ENCODE measurements at regions of chr3 and their contacts with region 1.

Region 1: DNA sequence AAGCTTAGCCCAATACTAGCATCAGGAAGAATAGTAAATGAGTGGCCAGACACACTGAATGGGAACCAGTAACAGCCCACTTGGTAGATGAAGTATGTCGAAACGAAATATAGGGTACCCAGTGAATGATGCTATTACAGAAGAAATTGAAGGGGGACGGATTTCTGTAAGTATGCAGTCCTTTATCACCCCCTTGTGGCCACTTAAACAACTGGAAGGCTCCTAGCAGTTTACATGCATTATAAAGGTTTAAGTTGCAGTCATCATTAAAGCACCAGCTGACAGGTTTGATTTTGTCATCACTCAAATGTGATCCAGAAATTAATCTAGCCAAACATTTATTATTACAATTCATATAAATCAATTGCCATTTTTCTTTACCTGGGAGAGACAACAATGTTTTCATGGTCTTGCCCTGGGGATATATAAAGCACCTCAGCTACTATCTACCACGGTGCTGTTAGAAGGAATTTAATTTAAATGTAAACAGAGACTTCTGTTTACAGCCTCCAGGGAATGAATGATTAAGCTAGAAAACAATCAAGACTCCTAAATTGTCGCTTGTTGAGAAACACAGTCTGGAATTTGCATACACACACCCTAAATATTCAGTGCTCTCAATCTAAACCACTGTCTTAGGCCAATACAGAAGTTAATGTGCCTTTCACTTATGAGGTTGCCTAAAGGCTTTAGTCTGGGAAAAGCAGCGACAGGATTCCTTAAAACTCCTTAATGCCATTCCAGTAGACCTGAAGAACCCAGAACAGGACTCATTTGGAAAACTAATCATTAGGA is 7.8 kb downstream of the EIF1B start:
- DNase-seq: peak; percentile 31
- H3K4me3 Mint-ChIP-seq: no peak overlapping the region
- H3K27ac Mint-ChIP-seq: no peak overlapping the region
- H3K4me1 Mint-ChIP-seq: peaks cover 4% of the 10 kb centered on the region
- H3K27me3 Mint-ChIP-seq: no peaks in the 10 kb centered on the region

Region 2: DNA sequence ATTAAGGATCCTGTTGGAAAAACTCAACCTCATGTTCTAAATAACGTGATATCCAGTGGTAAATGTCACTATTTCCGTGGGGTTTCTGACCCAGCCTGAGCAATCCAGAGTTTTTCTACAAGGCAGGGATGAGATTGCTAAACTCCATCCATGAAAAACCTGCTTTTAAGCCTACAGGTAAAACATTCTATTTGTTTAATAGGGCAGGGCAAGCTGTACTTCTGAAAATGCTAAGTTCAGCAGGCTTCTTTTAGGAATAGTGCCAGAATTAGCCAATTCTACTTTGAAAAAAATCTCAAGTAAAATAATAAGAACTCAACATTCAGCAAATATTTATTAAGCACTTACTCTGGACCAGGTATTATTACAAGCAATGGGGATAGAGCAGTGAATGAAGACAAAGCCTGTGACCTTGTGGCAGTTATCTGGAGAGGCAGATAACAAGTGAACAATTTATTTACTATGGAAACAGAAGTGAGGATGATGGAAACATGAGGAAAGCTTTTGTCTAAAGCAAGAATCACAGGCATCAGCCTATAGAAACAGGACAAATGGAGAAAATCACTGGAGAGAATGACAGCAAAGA is 897.4 kb before region 1 on chr3:
- CTCF ChIA-PET with region 1: no interaction called
- POLR2A ChIA-PET with region 1: no interaction called
- intact Hi-C with region 1: no loop called
- DNase-seq: no peak
- H3K4me3 Mint-ChIP-seq: no peak overlapping the region
- H3K27ac Mint-ChIP-seq: no peak overlapping the region
- H3K4me1 Mint-ChIP-seq: peaks cover 1% of the 10 kb centered on the region
- H3K27me3 Mint-ChIP-seq: no peaks in the 10 kb centered on the region

Region 3: GRCh38 chr3:39718674-39719595 is 598.3 kb before region 1 on chr3:
- CTCF ChIA-PET with region 1: no interaction called
- POLR2A ChIA-PET with region 1: no interaction called
- intact Hi-C with region 1: loop called (anchors 10 kb)
- DNase-seq: no peak
- H3K4me3 Mint-ChIP-seq: no peak overlapping the region
- H3K27ac Mint-ChIP-seq: no peak overlapping the region
- H3K4me1 Mint-ChIP-seq: no peaks in the 10 kb centered on the region
- H3K27me3 Mint-ChIP-seq: no peaks in the 10 kb centered on the region

Region 4: DNA sequence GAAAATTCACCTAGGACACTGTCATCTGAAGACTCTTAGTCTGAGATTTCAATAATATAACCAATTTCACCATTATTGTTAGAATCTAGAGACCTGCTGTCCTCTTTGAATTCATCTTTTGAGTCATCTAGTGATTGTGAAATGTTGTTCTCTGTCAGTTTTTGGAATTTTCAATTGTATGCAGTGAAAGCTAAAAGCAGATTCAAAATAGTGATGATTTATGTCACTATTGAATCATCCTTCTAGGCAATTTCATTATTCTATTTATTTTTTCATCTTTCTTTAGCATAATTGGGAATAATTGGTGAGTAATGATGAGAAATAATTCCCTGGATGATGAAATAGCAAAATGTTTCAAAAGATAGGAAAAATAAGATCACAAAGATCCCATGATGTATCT is 109.5 kb before region 1 on chr3:
- CTCF ChIA-PET with region 1: interaction called, 11 read pairs
- POLR2A ChIA-PET with region 1: no interaction called
- intact Hi-C with region 1: no loop called
- DNase-seq: no peak
- H3K4me3 Mint-ChIP-seq: no peak overlapping the region
- H3K27ac Mint-ChIP-seq: no peak overlapping the region
- H3K4me1 Mint-ChIP-seq: no peaks in the 10 kb centered on the region
- H3K27me3 Mint-ChIP-seq: no peaks in the 10 kb centered on the region

Region 5: DNA sequence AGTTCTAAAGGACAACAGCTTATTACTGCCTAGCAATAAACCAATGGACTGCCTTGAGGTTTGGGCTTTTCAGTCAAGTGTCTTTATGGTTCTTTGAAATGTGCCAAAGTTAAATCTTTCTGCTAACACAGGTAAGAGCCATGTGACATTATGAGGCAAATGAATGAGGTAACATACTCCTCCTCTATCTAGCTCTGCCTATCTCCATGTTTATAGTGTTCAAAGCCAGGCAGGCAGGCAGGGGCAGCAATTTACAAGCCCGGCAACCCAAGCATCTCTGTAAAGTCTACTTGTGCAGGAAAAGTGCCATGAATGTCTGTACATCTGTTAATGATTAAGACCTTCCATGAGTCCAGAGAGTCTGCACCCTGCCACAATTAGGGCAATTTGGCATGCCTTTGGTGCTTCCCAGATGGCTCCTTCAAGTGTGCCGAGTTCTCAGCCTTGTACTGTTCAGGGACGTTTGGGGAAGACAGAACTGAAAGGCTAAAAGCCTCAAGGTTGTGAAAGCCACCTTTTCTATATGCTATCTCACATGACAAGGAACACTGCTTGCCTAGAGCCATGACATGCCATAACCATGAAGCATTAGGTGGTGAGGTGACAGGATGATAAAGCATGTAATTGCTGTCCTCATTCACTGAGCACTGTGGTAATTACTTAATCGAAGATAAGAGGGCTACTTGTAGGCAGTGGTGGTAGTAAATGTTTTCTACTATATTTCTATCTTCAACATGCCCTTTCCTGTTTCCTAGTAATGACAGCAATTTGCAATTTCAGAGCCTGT is 49.1 kb before region 1 on chr3:
- CTCF ChIA-PET with region 1: no interaction called
- POLR2A ChIA-PET with region 1: no interaction called
- intact Hi-C with region 1: no loop called
- DNase-seq: no peak
- H3K4me3 Mint-ChIP-seq: no peak overlapping the region
- H3K27ac Mint-ChIP-seq: no peak overlapping the region
- H3K4me1 Mint-ChIP-seq: no peaks in the 10 kb centered on the region
- H3K27me3 Mint-ChIP-seq: no peaks in the 10 kb centered on the region

Measured in activated CD4-positive, alpha-beta memory T cell treated with anti-CD3 and anti-CD28 coated beads for 36 hours (primary cell).